ENCODE measurements at regions of chr2 and their contacts with region 1.

Region 1: DNA sequence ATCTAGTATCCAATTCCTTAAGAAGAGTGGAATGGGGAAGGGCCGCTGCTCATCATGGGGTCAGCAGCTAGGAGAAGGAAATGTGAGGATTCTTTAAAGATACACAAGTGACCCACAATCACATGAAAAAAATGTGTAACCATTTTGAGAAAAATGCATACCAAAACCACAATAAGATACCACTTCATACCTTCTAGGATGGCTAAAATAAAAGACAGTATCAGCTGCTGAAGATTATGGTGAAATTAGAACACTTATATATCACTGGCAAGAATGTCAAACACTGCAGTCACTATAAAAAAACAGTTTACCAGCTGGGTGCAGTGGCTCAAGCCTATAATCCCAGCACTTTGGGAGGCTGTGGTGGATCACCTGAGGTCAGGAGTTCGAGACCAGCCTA is 67.9 kb downstream of the C2orf74 start:
- DNase-seq: no peak
- ATAC-seq: no peak
- H3K4me3 ChIP-seq: no peak overlapping the region
- H3K27ac ChIP-seq: no peak overlapping the region
- H3K4me1 ChIP-seq: no peaks in the 10 kb centered on the region
- H3K27me3 ChIP-seq: no peaks in the 10 kb centered on the region
- CTCF ChIP-seq: no peak
- POLR2A ChIP-seq: no peak
- RAD21 ChIP-seq: no peak

Region 2: GRCh38 chr2:61214171-61214570 is 15.8 kb before region 1 on chr2:
- CTCF ChIA-PET with region 1: no interaction called
- POLR2A ChIA-PET with region 1: no interaction called
- RAD21 ChIA-PET with region 1: no interaction called
- intact Hi-C with region 1: loop called (anchors 2 kb)
- DNase-seq: no peak
- ATAC-seq: no peak
- H3K4me3 ChIP-seq: no peak overlapping the region
- H3K27ac ChIP-seq: no peak overlapping the region
- H3K4me1 ChIP-seq: peaks cover 0 to 3% of the 10 kb centered on the region in 2 experiments; a peak in 1 of 4 replicates
- H3K27me3 ChIP-seq: no peaks in the 10 kb centered on the region
- CTCF ChIP-seq: no peak
- POLR2A ChIP-seq: no peak
- RAD21 ChIP-seq: no peak

Region 3: DNA sequence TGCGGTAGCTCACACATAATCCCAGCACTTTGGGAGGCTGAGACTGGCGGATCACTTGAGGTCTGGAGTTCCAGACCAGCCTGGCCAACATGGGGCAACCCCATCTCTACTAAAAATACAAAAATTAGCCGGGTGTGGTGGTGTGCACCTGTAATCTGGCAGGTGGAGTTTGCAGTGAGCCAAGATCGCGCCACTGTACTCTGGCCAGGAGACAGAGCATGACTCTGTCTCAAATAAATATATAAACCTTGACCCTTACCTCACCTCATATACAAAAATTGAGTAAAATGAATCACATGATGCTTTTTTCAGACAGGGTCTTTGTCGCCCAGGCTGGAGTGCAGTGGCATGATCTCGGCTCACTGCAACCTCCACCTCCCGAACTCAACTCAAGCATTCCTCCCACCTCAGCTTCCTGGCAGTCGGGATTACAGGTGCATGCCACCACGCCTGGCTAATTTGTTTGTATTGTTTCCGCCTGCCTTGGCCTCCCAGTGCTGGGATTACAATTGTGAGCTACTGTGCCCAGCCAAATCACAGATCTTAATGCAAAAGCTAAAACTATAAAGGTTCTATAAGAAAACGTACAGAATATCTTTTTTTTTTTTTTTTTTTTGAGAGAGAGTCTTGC is 282.9 kb after region 1 on chr2:
- CTCF ChIA-PET with region 1: no interaction called
- POLR2A ChIA-PET with region 1: no interaction called
- RAD21 ChIA-PET with region 1: no interaction called
- intact Hi-C with region 1: no loop called
- DNase-seq: no peak
- ATAC-seq: no peak
- H3K4me3 ChIP-seq: no peak overlapping the region
- H3K27ac ChIP-seq: 0 out of 2 replicates have a peak overlapping the region, but pooled peaks have one; percentile 5
- H3K4me1 ChIP-seq: no peaks in the 10 kb centered on the region
- H3K27me3 ChIP-seq: no peaks in the 10 kb centered on the region
- CTCF ChIP-seq: no peak
- POLR2A ChIP-seq: no peak
- RAD21 ChIP-seq: no peak

Measured in HCT116 (cell line).